Naive thymus-derived CD4-positive, alpha-beta T cell (primary cell): ENCODE measurements at regions of chr6 and their contacts with region 1.

Region 1: DNA sequence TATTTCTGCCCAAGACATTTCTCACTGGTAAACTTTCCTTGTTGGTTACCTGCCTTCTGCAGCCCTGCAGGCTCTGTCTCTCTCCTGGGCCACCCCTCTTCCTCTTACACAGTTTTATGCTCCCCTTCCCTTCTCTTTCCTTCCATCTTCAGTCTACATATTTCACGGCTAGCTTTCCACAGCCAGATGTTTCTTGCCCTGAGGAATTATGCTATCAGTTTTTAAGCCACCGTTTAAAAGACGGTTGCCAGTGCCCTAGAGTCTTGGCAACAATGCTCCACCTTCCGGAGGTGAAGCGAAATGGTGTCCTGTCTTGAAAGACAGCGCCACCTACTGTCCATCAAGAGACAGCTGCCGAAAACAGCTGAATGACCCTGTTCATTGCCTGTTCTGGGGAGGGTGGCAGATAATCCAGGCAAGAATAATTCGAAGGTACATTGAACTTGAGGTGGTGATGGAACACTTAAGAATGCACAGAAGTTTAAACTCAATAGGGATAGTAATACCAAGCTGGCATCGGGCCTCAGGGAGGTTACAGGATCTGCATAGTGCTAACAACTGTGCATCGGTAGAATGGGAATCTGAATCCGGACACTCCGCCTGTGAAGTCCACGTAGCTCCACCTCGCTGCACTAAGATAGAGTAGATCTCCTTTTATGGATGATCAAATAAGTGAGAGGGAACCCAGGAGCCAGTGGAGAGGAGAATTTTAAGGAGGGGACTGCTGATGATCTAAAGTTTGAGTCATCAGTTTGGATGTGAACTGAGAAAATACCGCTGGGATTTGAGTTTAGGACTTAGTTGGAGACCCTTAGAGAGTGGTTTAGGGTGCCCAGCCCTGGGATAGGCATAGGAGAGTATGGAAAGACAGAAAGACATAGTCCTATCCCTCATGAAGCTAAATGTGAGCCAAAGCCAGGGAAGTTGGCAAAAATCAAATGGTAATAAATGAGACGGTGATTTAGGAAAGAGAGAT is 4.8 kb upstream of the TRIM40 start:
- DNase-seq: peak; percentile 21 to 83 (median 76)
- ATAC-seq: peak; percentile 99
- H3K4me3 ChIP-seq: no peak overlapping the region
- H3K4me3 Mint-ChIP-seq: peak overlapping the region in 6 of 10 donors; percentile 2 to 44 (median 30)
- H3K27ac ChIP-seq: no peak overlapping the region
- H3K27ac Mint-ChIP-seq: peak overlapping the region in 3 of 9 donors; percentile 2 to 79 (median 7)
- H3K4me1 ChIP-seq: peaks cover 0 to 4% of the 10 kb centered on the region in 2 donors
- H3K4me1 Mint-ChIP-seq: peaks cover 3 to 23% (median 6%) of the 10 kb centered on the region in 7 donors
- H3K27me3 ChIP-seq: peaks cover 5 to 12% of the 10 kb centered on the region in 2 donors
- H3K27me3 Mint-ChIP-seq: peaks cover 63 to 83% (median 67%) of the 10 kb centered on the region in 5 donors

Region 2: DNA sequence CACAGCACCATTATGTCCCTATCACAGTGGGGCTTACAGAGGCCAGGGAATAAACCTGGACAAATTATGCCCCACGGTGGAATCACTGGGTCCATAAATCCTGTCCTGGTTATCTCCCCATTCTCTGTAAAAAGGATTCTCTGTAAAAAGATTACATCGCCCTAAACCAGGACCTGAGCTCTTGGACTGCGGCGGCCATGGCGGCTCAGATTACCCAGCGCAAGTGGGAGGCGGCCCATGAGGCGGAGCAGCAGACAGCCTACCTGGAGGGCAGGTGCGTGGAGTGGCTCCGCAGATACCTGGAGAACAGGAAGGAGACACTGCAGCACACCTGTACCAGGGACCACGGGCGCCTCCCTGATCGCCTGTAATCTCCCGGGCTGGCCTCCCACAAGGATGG is 197.2 kb before region 1 on chr6:
- CTCF ChIA-PET with region 1: no interaction called
- POLR2A ChIA-PET with region 1: no interaction called
- intact Hi-C with region 1: no loop called
- DNase-seq: no peak
- ATAC-seq: no peak
- H3K4me3 ChIP-seq: no peak overlapping the region
- H3K4me3 Mint-ChIP-seq: no peak overlapping the region
- H3K27ac ChIP-seq: no peak overlapping the region
- H3K27ac Mint-ChIP-seq: no peak overlapping the region
- H3K4me1 ChIP-seq: no peaks in the 10 kb centered on the region
- H3K4me1 Mint-ChIP-seq: peaks cover 0 to 10% (median 5%) of the 10 kb centered on the region in 7 donors
- H3K27me3 ChIP-seq: no peaks in the 10 kb centered on the region
- H3K27me3 Mint-ChIP-seq: peaks cover 0 to 6% (median 0%) of the 10 kb centered on the region in 5 donors

Region 3: DNA sequence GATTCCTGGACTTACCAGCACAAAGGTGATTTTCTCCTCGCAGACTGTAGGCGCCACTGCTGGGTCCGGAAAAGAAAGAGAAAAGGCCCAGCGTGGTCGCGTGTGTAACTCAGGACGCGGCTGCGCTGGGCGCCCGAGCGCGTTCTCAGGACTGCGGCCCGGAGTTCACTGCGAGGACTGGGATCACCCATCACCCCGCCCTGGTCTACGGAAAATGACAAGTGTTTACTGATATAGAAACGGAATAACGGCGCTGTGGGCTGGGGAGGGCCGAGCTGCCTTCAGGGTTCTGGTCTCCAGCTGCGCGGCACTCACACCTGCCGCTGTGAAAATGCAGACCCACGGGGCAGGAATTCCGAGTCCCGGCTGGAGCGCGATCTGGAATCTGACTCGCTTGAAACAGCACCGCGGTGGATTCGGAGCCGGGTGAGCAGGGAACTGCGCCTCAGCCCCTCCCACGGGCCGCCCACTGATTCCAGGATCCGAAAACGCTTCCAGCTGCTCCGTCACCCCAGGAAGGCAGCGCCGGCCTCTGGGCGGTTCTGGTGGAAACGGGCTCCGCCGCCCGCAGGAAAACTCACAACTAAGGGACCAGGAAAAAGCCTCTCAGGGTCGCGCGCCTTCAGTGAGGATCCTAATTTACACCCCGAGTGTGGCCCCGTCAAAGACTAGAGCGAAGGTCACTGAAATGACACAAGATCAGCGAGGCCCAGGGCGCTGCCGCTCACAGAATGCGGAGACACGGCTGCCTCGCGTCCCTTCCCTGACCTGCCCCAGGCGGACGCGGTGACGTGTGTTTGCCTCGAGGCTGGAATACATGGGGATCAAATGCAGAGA is 154.4 kb before region 1 on chr6:
- CTCF ChIA-PET with region 1: no interaction called
- POLR2A ChIA-PET with region 1: no interaction called
- intact Hi-C with region 1: loop called in 1 of 2 experiments (anchors 2 kb)
- DNase-seq: peak in 8 of 9 donors; percentile 27 to 60 (median 42)
- ATAC-seq: peak; percentile 87
- H3K4me3 ChIP-seq: peak overlapping the region; percentile 60
- H3K4me3 Mint-ChIP-seq: peak overlapping the region; percentile 87 to 96 (median 92)
- H3K27ac ChIP-seq: no peak overlapping the region
- H3K27ac Mint-ChIP-seq: peak overlapping the region in 4 of 9 donors; percentile 0 to 51 (median 26)
- H3K4me1 ChIP-seq: peaks cover 15 to 21% of the 10 kb centered on the region in 2 donors
- H3K4me1 Mint-ChIP-seq: peaks cover 38 to 46% (median 42%) of the 10 kb centered on the region in 7 donors
- H3K27me3 ChIP-seq: peaks cover 6 to 12% of the 10 kb centered on the region in 2 donors
- H3K27me3 Mint-ChIP-seq: peaks cover 36 to 74% (median 53%) of the 10 kb centered on the region in 5 donors

Region 4: GRCh38 chr6:30013291-30013922 is 117.8 kb before region 1 on chr6:
- CTCF ChIA-PET with region 1: no interaction called
- POLR2A ChIA-PET with region 1: no interaction called
- intact Hi-C with region 1: loop called in 1 of 2 experiments (anchors 2 kb)
- DNase-seq: peak in 8 of 9 donors; percentile 13 to 47 (median 32)
- ATAC-seq: peak; percentile 57
- H3K4me3 ChIP-seq: no peak overlapping the region
- H3K4me3 Mint-ChIP-seq: no peak overlapping the region
- H3K27ac ChIP-seq: no peak overlapping the region
- H3K27ac Mint-ChIP-seq: peak overlapping the region in 1 of 9 donors; percentile 12
- H3K4me1 ChIP-seq: no peaks in the 10 kb centered on the region
- H3K4me1 Mint-ChIP-seq: peaks cover 0 to 4% (median 0%) of the 10 kb centered on the region in 7 donors
- H3K27me3 ChIP-seq: peaks cover 0 to 3% of the 10 kb centered on the region in 2 donors
- H3K27me3 Mint-ChIP-seq: peaks cover 4 to 34% (median 15%) of the 10 kb centered on the region in 5 donors

Region 5: GRCh38 chr6:30061092-30061857 is 69.9 kb before region 1 on chr6 and contains the start of gene POLR1H:
- CTCF ChIA-PET with region 1: interaction called, 4 read pairs
- POLR2A ChIA-PET with region 1: interaction called, 3 read pairs
- intact Hi-C with region 1: loop called in 1 of 2 experiments (anchors 1 kb)
- DNase-seq: peak; percentile 69 to 93 (median 86)
- ATAC-seq: peak; percentile 93
- H3K4me3 ChIP-seq: peak within 1 kb of the TSS; percentile 95
- H3K4me3 Mint-ChIP-seq: peak within 1 kb of the TSS; percentile 93 to 99 (median 98)
- H3K27ac ChIP-seq: peak within 1 kb of the TSS; percentile 92
- H3K27ac Mint-ChIP-seq: peak within 1 kb of the TSS; percentile 95 to 99 (median 99)
- H3K4me1 ChIP-seq: peaks cover 24 to 26% of the 10 kb centered on the region in 2 donors
- H3K4me1 Mint-ChIP-seq: peaks cover 17 to 63% (median 55%) of the 10 kb centered on the region in 7 donors
- H3K27me3 ChIP-seq: no peaks in the 10 kb centered on the region
- H3K27me3 Mint-ChIP-seq: no peaks in the 10 kb centered on the region
- total RNA-seq, gene POLR1H: 27.3 to 66.8 (median 45.0) TPM

Region 6: DNA sequence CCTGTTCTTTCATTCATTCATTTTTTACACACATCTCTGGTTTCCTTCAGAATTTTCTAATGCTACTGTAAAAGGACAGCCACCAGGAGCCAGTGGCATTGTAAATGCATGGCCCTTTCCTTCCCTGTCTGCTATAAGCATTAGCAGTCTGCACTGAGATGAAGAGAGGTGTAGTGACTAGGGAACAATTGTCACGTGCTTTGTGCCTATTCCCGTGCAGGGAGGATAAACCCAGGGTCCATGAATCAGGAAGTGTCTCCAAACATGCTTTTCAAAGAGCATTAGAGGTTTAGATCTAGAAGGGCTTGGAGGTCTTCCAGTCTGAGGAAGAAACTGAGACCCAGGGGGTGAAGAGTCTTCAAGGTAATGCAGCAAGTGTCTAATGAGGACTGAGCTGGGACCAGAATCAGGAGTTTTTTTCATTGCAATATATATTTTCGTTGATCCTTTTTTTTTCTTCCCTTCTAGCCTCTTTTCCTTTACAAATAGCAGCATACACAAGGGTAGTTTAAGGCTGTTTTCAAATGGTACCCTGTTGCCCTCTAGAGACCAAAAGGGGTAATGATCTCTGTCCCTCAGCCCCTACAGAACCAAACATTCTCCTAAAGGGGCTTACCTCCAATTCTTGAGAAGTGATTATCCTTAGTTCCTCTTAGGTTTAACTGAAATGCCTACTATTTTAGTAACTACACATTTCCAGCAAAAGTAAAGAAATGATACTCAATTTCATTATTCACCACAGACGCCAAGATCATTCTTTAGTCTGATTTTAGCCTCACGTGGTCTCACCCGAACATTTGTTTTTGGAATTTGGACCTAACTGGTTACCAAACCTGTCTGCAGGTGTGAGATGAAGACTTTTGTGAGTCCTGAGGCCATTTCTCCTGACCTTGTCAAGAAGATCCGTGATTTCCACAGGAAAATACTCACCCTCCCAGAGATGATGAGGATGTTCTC is 38.8 kb after region 1 on chr6:
- CTCF ChIA-PET with region 1: interaction called, 3 read pairs
- POLR2A ChIA-PET with region 1: no interaction called
- intact Hi-C with region 1: loop called (anchors 1 kb)
- DNase-seq: peak in 5 of 9 donors; percentile 23 to 44 (median 34)
- ATAC-seq: peak; percentile 81
- H3K4me3 ChIP-seq: no peak overlapping the region
- H3K4me3 Mint-ChIP-seq: no peak overlapping the region
- H3K27ac ChIP-seq: no peak overlapping the region
- H3K27ac Mint-ChIP-seq: no peak overlapping the region
- H3K4me1 ChIP-seq: peaks cover 0 to 3% of the 10 kb centered on the region in 2 donors
- H3K4me1 Mint-ChIP-seq: peaks cover 0 to 37% (median 4%) of the 10 kb centered on the region in 7 donors
- H3K27me3 ChIP-seq: peaks cover 9 to 12% of the 10 kb centered on the region in 2 donors
- H3K27me3 Mint-ChIP-seq: peaks cover 42 to 65% (median 57%) of the 10 kb centered on the region in 5 donors

Region 7: GRCh38 chr6:30259140-30260035 is 128.2 kb after region 1 on chr6:
- CTCF ChIA-PET with region 1: no interaction called
- POLR2A ChIA-PET with region 1: no interaction called
- intact Hi-C with region 1: loop called in 1 of 2 experiments (anchors 1 kb)
- DNase-seq: peak; percentile 42 to 68 (median 53)
- ATAC-seq: peak; percentile 93
- H3K4me3 ChIP-seq: peak overlapping the region; percentile 79
- H3K4me3 Mint-ChIP-seq: peak overlapping the region; percentile 78 to 97 (median 90)
- H3K27ac ChIP-seq: peak overlapping the region; percentile 78
- H3K27ac Mint-ChIP-seq: peak overlapping the region in 8 of 9 donors; percentile 65 to 91 (median 78)
- H3K4me1 ChIP-seq: peaks cover 5 to 6% of the 10 kb centered on the region in 2 donors
- H3K4me1 Mint-ChIP-seq: peaks cover 7 to 17% (median 13%) of the 10 kb centered on the region in 7 donors
- H3K27me3 ChIP-seq: no peaks in the 10 kb centered on the region
- H3K27me3 Mint-ChIP-seq: peaks cover 0 to 35% (median 0%) of the 10 kb centered on the region in 5 donors

Region 8: GRCh38 chr6:30283761-30284160 is 152.6 kb after region 1 on chr6:
- CTCF ChIA-PET with region 1: no interaction called
- POLR2A ChIA-PET with region 1: no interaction called
- intact Hi-C with region 1: no loop called
- DNase-seq: no peak
- ATAC-seq: no peak
- H3K4me3 ChIP-seq: no peak overlapping the region
- H3K4me3 Mint-ChIP-seq: no peak overlapping the region
- H3K27ac ChIP-seq: no peak overlapping the region
- H3K27ac Mint-ChIP-seq: no peak overlapping the region
- H3K4me1 ChIP-seq: no peaks in the 10 kb centered on the region
- H3K4me1 Mint-ChIP-seq: no peaks in the 10 kb centered on the region
- H3K27me3 ChIP-seq: no peaks in the 10 kb centered on the region
- H3K27me3 Mint-ChIP-seq: no peaks in the 10 kb centered on the region